GM13976 (cell line): ENCODE measurements at regions of chr10 and their contacts with region 1.

Region 1: DNA sequence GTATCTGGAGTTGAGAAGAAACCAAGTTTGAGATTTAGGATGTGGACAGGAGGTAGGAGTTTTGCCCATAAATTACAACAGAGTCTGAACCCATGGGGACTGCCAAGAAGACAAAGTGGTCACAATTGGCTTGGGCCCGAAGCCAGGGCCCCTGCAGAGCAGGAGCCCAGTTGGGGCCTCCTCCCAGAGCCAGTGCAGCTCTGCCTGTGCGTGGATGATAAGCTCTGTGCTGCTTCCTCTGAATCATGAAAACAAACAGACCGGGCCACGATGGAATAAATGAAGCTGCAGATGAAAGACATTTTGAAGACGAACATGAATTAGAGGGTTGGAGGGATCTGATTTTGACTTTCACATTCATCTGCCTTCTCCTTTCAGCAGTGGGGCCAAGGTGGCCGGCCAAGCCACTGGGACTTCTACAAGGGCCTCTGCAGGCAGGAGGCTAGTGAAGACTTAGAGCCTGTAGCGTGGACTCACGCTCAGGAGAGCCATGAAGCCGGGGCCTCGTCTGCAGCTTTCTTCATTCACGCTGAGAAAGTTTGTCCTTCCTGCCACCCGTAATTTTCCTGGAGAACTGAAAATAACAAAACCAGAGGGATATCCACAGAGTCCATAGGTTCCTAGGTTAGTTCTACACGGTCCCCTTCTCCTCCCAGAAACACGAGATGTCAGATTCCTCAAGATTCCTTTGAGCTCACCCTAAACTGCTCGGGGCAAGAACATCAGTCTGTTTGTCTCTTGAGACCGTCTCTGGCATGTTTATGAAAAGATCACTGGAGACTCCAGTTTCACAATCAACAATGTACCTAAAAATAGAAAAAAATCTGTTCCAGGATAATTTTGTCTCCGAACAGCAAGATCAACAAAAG is 156.7 kb upstream of the LYZL1 start:
- DNase-seq: no peak
- CTCF ChIP-seq: no peak

Region 2: DNA sequence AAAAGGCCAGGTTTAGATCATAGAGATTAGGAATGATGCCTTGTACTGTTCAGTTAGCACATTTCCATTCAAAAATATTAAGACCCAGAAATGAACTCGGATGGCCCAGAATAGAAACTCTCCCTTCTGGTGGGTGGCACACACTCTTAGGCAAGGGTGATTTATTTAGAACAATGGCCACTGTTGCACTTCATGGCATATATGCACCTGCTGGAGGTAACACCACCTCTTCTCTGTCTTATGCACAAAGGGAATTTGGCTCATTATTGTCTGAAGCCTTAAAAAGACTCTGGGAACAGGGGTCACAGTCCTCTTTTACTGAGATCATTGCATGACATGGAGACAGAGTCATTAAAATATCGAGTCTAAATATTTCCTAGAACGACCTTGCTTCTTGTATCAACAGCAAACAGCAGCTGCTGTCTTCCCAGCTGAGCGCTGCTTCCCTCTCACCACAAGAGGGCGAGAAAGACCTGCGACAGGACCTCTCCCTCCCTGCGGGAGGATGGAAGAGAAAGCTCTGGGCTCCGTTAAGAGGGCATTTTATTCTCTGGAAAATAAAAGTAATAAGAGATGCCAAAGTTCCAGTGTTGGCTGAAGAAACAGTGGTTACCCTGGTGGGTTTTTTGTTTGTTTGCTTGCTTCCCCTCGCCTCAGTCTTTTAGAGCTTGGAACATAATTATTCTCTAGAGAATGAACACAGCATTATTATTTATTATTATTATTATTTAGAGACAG is 468.4 kb before region 1 on chr10:
- in situ Hi-C with region 1: loop called (anchors 25 kb)
- DNase-seq: peak; percentile 75
- CTCF ChIP-seq: peak; percentile 95

Region 3: GRCh38 chr10:28959850-28960501 is 172.2 kb before region 1 on chr10:
- in situ Hi-C with region 1: no loop called
- DNase-seq: no peak
- CTCF ChIP-seq: no peak